ENCODE measurements at regions of chr1 and their contacts with region 1.

Region 1: GRCh38 chr1:225474986-225475820 is 47.4 kb upstream of the LBR start:
- DNase-seq: peak; percentile 81 to 94 (median 91)
- ATAC-seq: peak; percentile 90
- H3K4me3 ChIP-seq: no peak overlapping the region
- H3K27ac ChIP-seq: no peak overlapping the region
- H3K4me1 ChIP-seq: peaks cover 0 to 16% of the 10 kb centered on the region in 2 experiments; a peak in 3 of 5 replicates
- H3K27me3 ChIP-seq: peaks cover 15 to 34% of the 10 kb centered on the region in 2 experiments; a peak in 4 of 5 replicates
- CTCF ChIP-seq: peak; percentile 100
- EP300 ChIP-seq: no peak
- POLR2A ChIP-seq: no peak
- RAD21 ChIP-seq: peak; percentile 100

Region 2: GRCh38 chr1:225554216-225554812 is 79.1 kb after region 1 on chr1:
- CTCF ChIA-PET with region 1: interaction called, 11 read pairs
- POLR2A ChIA-PET with region 1: no interaction called
- in situ Hi-C with region 1: no loop called
- intact Hi-C with region 1: no loop called
- DNase-seq: peak; percentile 22 to 34 (median 30)
- ATAC-seq: peak; percentile 73; the same call in 2 of the 3 replicates
- H3K4me3 ChIP-seq: no peak overlapping the region
- H3K27ac ChIP-seq: no peak overlapping the region
- H3K4me1 ChIP-seq: no peaks in the 10 kb centered on the region
- H3K27me3 ChIP-seq: peaks cover 11 to 14% of the 10 kb centered on the region in 2 experiments; a peak in 3 of 5 replicates
- CTCF ChIP-seq: peak; percentile 53 to 68 (median 59); a peak in 4 of 6 replicates
- EP300 ChIP-seq: no peak
- POLR2A ChIP-seq: no peak
- RAD21 ChIP-seq: peak; percentile 64 to 76

Region 3: DNA sequence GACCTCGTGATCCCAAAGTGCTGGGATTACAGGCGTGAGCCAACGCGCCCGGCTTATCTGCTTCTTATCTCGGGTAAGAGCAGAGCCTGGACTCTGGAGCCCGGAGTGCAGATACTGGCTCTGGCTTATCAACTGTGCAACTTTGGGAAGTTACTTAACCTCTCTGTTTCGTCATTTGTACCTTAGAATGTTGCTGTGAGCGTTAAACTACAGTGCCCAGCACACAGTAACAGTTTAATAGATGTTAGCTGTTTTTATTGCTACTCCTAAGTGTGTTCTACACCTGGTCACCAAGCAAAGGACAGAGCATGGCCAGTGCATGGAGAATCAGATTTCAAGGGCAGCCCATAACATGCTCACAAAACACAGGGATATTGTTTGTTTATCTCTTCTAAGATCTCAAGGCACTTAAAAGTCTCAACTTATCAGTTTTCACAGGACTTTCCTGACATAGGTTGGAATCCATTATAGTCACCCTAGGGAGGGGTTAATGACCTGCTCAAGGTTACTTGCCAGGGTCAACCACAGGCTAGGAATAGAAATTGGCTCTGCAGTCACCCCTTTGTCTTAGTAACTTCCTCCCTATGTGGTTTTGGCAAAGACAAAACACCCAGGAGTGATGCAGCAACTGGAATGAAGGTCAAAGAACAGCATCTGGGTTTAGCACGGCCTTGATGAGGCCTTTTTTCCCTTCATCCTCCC is 279.9 kb after region 1 on chr1:
- CTCF ChIA-PET with region 1: no interaction called
- POLR2A ChIA-PET with region 1: no interaction called
- in situ Hi-C with region 1: no loop called
- intact Hi-C with region 1: no loop called
- DNase-seq: peak in 1 of 4 experiments; percentile 35
- ATAC-seq: no peak
- H3K4me3 ChIP-seq: no peak overlapping the region
- H3K27ac ChIP-seq: no peak overlapping the region
- H3K4me1 ChIP-seq: peaks cover 0 to 3% of the 10 kb centered on the region in 2 experiments; a peak in 3 of 5 replicates
- H3K27me3 ChIP-seq: peaks cover 30 to 47% of the 10 kb centered on the region in 2 experiments
- CTCF ChIP-seq: no peak
- EP300 ChIP-seq: no peak
- POLR2A ChIP-seq: no peak
- RAD21 ChIP-seq: no peak

Region 4: DNA sequence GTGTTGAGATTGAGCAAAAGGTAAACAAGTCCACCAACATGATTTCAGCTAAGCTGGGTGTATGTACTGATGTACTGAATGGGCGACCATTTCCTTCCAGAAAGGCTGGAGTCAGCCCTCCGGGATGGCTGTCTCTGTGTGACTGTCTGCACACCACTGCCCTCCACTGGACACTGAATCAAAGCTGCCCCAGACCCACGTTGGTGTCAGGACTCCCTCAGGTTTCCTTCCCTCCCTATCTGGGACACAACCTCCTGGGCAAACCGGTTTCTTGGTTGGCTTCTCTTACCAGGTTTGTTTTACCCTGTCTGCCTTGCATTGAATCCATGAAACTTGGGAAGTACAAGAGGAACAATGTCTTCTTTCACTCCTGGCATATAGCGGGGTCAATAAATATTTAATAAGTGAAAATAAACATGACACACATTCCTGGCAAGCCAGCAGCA is 297.1 kb after region 1 on chr1:
- CTCF ChIA-PET with region 1: interaction called, 53 read pairs
- POLR2A ChIA-PET with region 1: interaction called, 5 read pairs
- in situ Hi-C with region 1: loop called (anchors 5 kb)
- intact Hi-C with region 1: loop called (anchors 2 kb)
- DNase-seq: peak; percentile 78 to 90 (median 80)
- ATAC-seq: peak; percentile 93
- H3K4me3 ChIP-seq: no peak overlapping the region
- H3K27ac ChIP-seq: no peak overlapping the region
- H3K4me1 ChIP-seq: peaks cover 13 to 23% of the 10 kb centered on the region in 2 experiments
- H3K27me3 ChIP-seq: no peaks in the 10 kb centered on the region
- CTCF ChIP-seq: peak; percentile 92 to 97 (median 95)
- EP300 ChIP-seq: no peak
- POLR2A ChIP-seq: no peak
- RAD21 ChIP-seq: peak; percentile 93 to 97

Region 5: GRCh38 chr1:225777583-225778336 is 302.6 kb after region 1 on chr1 and contains the start of gene SRP9:
- CTCF ChIA-PET with region 1: interaction called, 53 read pairs
- POLR2A ChIA-PET with region 1: interaction called, 4 read pairs
- in situ Hi-C with region 1: loop called (anchors 5 kb)
- intact Hi-C with region 1: loop called (anchors 2 kb)
- DNase-seq: peak; percentile 99 to 100 (median 100)
- ATAC-seq: peak; percentile 99
- H3K4me3 ChIP-seq: peak within 1 kb of the TSS; percentile 95
- H3K27ac ChIP-seq: peak within 1 kb of the TSS; percentile 100
- H3K4me1 ChIP-seq: peaks cover 8 to 17% of the 10 kb centered on the region in 2 experiments; a peak in 4 of 5 replicates
- H3K27me3 ChIP-seq: no peaks in the 10 kb centered on the region
- CTCF ChIP-seq: peak; percentile 93 to 98 (median 98)
- EP300 ChIP-seq: no peak
- POLR2A ChIP-seq: peak; percentile 98
- RAD21 ChIP-seq: peak; percentile 66 to 68
- polyA plus RNA-seq, gene SRP9: 1,645 to 1,892 TPM

Region 6: GRCh38 chr1:225845571-225846259 is 370.5 kb after region 1 on chr1:
- CTCF ChIA-PET with region 1: interaction called, 53 read pairs
- POLR2A ChIA-PET with region 1: no interaction called
- in situ Hi-C with region 1: loop called (anchors 10 kb)
- intact Hi-C with region 1: loop called (anchors 2 kb)
- DNase-seq: peak; percentile 78 to 87 (median 82)
- ATAC-seq: peak; percentile 90
- H3K4me3 ChIP-seq: no peak overlapping the region
- H3K27ac ChIP-seq: no peak overlapping the region
- H3K4me1 ChIP-seq: peaks cover 9 to 42% of the 10 kb centered on the region in 2 experiments; a peak in 4 of 5 replicates
- H3K27me3 ChIP-seq: no peaks in the 10 kb centered on the region
- CTCF ChIP-seq: peak; percentile 85 to 91 (median 90)
- EP300 ChIP-seq: no peak
- POLR2A ChIP-seq: no peak; the same call in 1 of the 2 replicates
- RAD21 ChIP-seq: peak; percentile 82 to 87

Region 7: DNA sequence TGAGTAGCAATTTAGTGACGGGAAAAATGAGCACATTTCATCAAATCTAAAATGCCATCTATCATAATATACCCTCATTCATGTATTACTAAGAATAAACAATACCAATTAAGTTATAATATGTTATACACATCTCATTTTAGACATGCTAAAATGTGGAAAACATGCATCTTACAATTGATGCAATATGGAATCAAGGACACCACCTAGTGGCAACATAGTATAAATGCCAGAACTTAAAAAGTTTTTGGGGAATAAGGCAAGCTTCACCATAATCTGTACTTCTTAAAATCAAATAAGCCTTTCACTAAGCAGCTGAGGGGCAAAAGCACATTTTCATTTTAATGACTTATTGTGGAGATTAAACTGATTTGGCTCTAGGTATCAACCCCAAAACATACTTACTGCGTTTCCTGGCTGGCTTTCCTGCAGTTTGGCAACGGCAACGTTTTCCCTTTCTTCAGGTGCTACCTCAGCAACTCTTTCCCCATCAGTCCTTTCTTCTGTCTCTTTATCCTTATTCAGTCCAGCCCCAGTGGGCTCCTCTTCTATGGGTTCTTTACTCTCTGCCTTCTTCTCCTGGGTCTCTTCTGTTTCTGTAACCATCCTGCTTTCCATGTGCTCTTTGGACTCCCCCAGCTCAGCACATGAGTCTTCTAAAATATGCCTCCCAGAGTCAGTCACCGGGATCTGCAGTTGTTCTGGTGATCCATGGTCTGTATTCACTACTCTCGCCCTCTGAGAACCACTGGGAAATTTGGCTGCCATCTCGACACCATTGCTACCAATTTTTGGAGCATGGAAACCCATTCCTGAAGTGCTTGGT is 512.5 kb after region 1 on chr1:
- CTCF ChIA-PET with region 1: interaction called, 36 read pairs
- POLR2A ChIA-PET with region 1: interaction called, 3 read pairs
- in situ Hi-C with region 1: loop called (anchors 5 kb)
- intact Hi-C with region 1: no loop called
- DNase-seq: peak in 2 of 4 experiments; percentile 42 to 71
- ATAC-seq: peak; percentile 79
- H3K4me3 ChIP-seq: no peak overlapping the region
- H3K27ac ChIP-seq: no peak overlapping the region; the same call in 2 of the 3 replicates
- H3K4me1 ChIP-seq: no peaks in the 10 kb centered on the region
- H3K27me3 ChIP-seq: no peaks in the 10 kb centered on the region
- CTCF ChIP-seq: peak; percentile 62 to 82 (median 68); a peak in 5 of 6 replicates
- EP300 ChIP-seq: no peak
- POLR2A ChIP-seq: no peak
- RAD21 ChIP-seq: peak; percentile 62 to 74

Region 8: GRCh38 chr1:226195144-226195543 is 719.9 kb after region 1 on chr1:
- CTCF ChIA-PET with region 1: interaction called, 4 read pairs
- POLR2A ChIA-PET with region 1: no interaction called
- in situ Hi-C with region 1: loop called (anchors 10 kb)
- intact Hi-C with region 1: no loop called
- DNase-seq: no peak
- ATAC-seq: no peak
- H3K4me3 ChIP-seq: no peak overlapping the region
- H3K27ac ChIP-seq: no peak overlapping the region
- H3K4me1 ChIP-seq: peaks cover 3 to 6% of the 10 kb centered on the region in 2 experiments; a peak in 2 of 5 replicates
- H3K27me3 ChIP-seq: no peaks in the 10 kb centered on the region; a peak in 1 of 5 replicates
- CTCF ChIP-seq: no peak
- EP300 ChIP-seq: no peak
- POLR2A ChIP-seq: no peak
- RAD21 ChIP-seq: no peak

Measured in K562 (cell line).